Ovary (tissue), 10 donors: ENCODE measurements at regions of chr12 and their contacts with region 1.

Region 1: DNA sequence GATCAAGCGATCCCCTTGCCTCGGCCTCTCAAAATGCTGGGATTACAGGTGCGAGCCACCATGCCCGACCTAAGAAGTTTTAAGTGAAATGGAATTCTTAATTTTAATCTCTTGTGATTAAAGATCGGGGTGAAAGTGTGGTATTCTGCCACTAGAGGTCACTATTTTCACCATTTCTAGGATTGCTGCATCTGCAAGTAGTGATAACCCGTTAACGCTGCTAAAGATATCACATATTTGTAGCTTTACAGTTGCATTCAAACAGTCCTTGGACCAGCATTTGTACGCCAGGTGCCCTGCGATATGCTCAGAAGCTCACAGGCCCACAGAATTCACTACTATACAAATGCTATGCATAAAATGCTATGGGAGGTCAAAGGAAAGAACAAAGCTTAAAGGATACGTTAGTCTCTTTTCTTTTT is 19.3 kb downstream of the CCDC62 start:
- DNase-seq: no peak
- H3K4me3 ChIP-seq: no peak overlapping the region
- H3K27ac ChIP-seq: no peak overlapping the region
- H3K4me1 ChIP-seq: no peaks in the 10 kb centered on the region
- H3K27me3 ChIP-seq: no peaks in the 10 kb centered on the region
- CTCF ChIP-seq: peak; percentile 33 to 72 (median 35)
- EP300 ChIP-seq: no peak
- POLR2A ChIP-seq: no peak

Region 2: DNA sequence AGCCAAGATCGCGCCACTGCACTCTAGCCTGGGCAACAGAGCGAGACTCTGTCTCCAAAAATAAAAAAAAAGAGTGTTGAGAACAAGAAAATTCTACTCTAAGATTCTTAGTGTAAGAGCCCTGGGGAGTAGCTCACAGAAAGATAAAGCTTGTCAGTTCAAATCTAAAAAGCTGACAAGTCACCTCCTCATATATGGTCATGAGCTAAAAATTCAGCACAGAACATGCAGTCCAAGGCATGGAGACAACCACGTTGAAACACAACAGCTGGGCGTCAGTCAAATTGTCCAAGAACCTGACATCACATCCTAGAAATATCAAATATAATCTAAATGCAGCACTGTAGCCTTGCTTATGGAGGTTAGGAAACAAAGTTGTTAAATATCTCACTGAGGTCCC is 419.0 kb before region 1 on chr12:
- intact Hi-C with region 1: no loop called
- DNase-seq: no peak
- H3K4me3 ChIP-seq: no peak overlapping the region
- H3K27ac ChIP-seq: no peak overlapping the region
- H3K4me1 ChIP-seq: no peaks in the 10 kb centered on the region
- H3K27me3 ChIP-seq: no peaks in the 10 kb centered on the region
- CTCF ChIP-seq: no peak
- EP300 ChIP-seq: no peak
- POLR2A ChIP-seq: no peak

Region 3: GRCh38 chr12:122669397-122670070 is 124.2 kb before region 1 on chr12:
- intact Hi-C with region 1: no loop called
- DNase-seq: no peak
- H3K4me3 ChIP-seq: no peak overlapping the region
- H3K27ac ChIP-seq: no peak overlapping the region
- H3K4me1 ChIP-seq: no peaks in the 10 kb centered on the region
- H3K27me3 ChIP-seq: no peaks in the 10 kb centered on the region
- CTCF ChIP-seq: no peak
- EP300 ChIP-seq: no peak
- POLR2A ChIP-seq: no peak

Region 4: GRCh38 chr12:122946690-122947341 is 153.1 kb after region 1 on chr12:
- intact Hi-C with region 1: loop called in 3 of 4 experiments (anchors 10 kb)
- DNase-seq: peak in 3 of 5 donors; percentile 51 to 54 (median 52)
- H3K4me3 ChIP-seq: no peak overlapping the region
- H3K27ac ChIP-seq: no peak overlapping the region
- H3K4me1 ChIP-seq: no peaks in the 10 kb centered on the region
- H3K27me3 ChIP-seq: no peaks in the 10 kb centered on the region
- CTCF ChIP-seq: no peak
- EP300 ChIP-seq: no peak
- POLR2A ChIP-seq: no peak

Region 5: GRCh38 chr12:122951979-122952892 is 158.5 kb after region 1 on chr12:
- intact Hi-C with region 1: loop called in 3 of 4 experiments (anchors 10 kb)
- DNase-seq: peak; percentile 52 to 77 (median 67)
- H3K4me3 ChIP-seq: no peak overlapping the region
- H3K27ac ChIP-seq: no peak overlapping the region
- H3K4me1 ChIP-seq: no peaks in the 10 kb centered on the region
- H3K27me3 ChIP-seq: no peaks in the 10 kb centered on the region
- CTCF ChIP-seq: peak; percentile 55 to 63 (median 58)
- EP300 ChIP-seq: no peak
- POLR2A ChIP-seq: no peak